B cell (primary cell): ENCODE measurements at regions of chr15 and their contacts with region 1.

Region 1: DNA sequence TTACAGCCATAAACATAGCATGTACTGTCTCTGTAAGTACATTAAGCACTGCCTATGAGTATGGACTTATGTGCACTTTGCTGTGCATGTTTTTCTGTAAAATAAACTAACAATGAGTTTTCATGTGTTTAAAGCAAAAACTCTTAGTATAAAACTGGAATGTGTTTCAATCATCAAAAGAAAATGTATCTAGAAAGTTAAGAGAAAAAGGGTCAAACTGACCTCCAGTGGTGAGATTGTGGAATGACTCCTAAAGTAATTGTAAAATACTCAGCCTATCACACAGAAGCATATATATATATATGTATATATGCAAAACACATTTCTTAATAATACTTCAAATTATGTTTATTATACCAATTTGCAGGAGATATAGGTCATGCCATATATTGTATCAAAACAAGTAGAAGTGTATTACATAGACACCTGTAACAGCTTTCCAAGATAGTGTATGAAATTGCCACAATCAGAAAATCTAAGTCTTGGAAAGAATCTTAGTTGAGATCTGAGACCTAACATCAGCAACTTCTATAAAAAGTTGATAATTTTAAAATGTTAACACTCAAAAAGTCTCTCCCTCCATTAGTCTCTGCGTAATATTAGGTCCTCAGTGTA is 199.6 kb downstream of the FMN1 start:
- DNase-seq: peak; percentile 49
- ATAC-seq: no peak
- H3K4me3 ChIP-seq: no peak overlapping the region
- H3K4me3 Mint-ChIP-seq: no peak overlapping the region
- H3K27ac ChIP-seq: no peak overlapping the region
- H3K27ac Mint-ChIP-seq: no peak overlapping the region
- H3K4me1 ChIP-seq: no peaks in the 10 kb centered on the region
- H3K4me1 Mint-ChIP-seq: no peaks in the 10 kb centered on the region
- H3K27me3 ChIP-seq: no peaks in the 10 kb centered on the region
- H3K27me3 Mint-ChIP-seq: peaks cover 24% of the 10 kb centered on the region
- CTCF ChIP-seq: peak; percentile 74

Region 2: DNA sequence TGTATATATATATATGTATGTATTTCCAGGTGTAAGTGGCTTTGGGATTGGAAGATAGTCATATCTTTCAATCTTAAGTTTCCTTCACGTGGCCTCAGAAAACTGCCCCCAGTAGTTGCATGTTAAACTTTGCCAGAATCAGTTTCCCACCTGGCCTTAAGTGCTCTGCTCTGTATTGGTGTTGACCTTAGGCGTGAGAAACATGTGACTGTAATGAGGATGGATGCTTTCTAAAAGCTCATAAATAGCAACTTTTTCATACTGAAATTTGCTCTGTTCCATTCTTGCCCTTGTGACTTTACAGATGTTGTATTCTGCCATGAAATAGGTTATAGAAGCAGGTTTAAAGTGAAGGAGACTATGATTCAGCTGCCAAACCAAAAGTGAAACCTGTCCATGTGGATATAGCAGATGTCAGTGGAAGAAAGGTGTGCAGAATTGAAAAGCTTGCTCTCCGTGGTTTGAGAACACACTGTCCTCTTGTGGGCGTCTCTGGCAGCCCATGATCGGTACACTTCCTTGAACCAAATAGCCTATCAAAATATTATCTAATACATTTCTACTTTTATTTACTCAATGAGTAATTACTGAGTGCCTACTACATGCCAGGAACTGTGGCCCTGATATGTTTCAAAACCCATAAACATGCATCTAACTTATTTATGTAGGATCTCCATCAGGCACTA is 337.6 kb before region 1 on chr15:
- CTCF ChIA-PET with region 1: interaction called, 177 read pairs
- POLR2A ChIA-PET with region 1: no interaction called
- intact Hi-C with region 1: loop called (anchors 1 kb)
- DNase-seq: no peak
- ATAC-seq: no peak
- H3K4me3 ChIP-seq: no peak overlapping the region
- H3K4me3 Mint-ChIP-seq: no peak overlapping the region
- H3K27ac ChIP-seq: no peak overlapping the region
- H3K27ac Mint-ChIP-seq: no peak overlapping the region
- H3K4me1 ChIP-seq: no peaks in the 10 kb centered on the region
- H3K4me1 Mint-ChIP-seq: peaks cover 3% of the 10 kb centered on the region
- H3K27me3 ChIP-seq: no peaks in the 10 kb centered on the region
- H3K27me3 Mint-ChIP-seq: no peaks in the 10 kb centered on the region
- CTCF ChIP-seq: no peak

Region 3: DNA sequence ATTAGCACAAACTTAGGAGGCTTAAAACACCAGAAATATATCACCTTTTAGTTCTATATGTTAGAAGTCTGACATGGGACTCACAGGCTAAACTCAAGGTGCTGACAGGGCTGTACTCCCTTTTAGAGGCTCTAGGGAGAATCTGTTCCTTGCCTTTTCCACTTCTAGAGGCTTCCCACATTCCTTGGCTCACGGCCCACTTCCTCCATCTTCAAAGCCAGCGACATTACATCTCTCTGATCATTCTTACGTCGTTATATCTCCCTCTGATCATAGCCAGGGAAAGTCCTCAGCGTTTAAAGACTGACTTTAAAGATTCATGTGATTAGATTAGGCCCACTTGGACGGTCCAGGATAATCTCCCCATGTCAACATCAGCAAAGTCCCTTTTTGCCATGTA is 110.8 kb before region 1 on chr15:
- CTCF ChIA-PET with region 1: interaction called, 3 read pairs
- POLR2A ChIA-PET with region 1: no interaction called
- intact Hi-C with region 1: loop called (anchors 5 kb)
- DNase-seq: no peak
- ATAC-seq: no peak
- H3K4me3 ChIP-seq: no peak overlapping the region
- H3K4me3 Mint-ChIP-seq: no peak overlapping the region
- H3K27ac ChIP-seq: no peak overlapping the region
- H3K27ac Mint-ChIP-seq: no peak overlapping the region
- H3K4me1 ChIP-seq: no peaks in the 10 kb centered on the region
- H3K4me1 Mint-ChIP-seq: no peaks in the 10 kb centered on the region
- H3K27me3 ChIP-seq: no peaks in the 10 kb centered on the region
- H3K27me3 Mint-ChIP-seq: no peaks in the 10 kb centered on the region
- CTCF ChIP-seq: no peak

Region 4: DNA sequence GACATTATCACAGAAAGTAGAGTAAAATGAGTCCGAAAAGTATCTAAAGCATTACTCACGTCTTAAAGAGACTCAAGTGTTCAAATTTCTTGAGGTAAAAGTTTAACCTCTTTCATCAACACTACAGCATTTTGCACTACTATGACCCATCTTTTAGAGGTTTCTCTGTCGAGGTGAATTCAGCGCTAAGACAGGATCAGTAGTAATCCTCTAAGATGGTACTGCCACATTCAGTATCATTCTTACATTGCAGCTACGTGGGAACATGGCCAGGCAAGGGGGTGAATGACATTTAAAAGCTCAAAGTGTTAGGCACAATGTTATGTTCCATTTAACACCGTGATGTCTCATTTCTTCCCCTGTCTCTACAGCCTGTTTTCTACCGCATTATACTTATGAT is 11.2 kb before region 1 on chr15:
- CTCF ChIA-PET with region 1: interaction called, 10 read pairs
- POLR2A ChIA-PET with region 1: no interaction called
- intact Hi-C with region 1: no loop called
- DNase-seq: no peak
- ATAC-seq: no peak
- H3K4me3 ChIP-seq: no peak overlapping the region
- H3K4me3 Mint-ChIP-seq: no peak overlapping the region
- H3K27ac ChIP-seq: no peak overlapping the region
- H3K27ac Mint-ChIP-seq: no peak overlapping the region
- H3K4me1 ChIP-seq: no peaks in the 10 kb centered on the region
- H3K4me1 Mint-ChIP-seq: no peaks in the 10 kb centered on the region
- H3K27me3 ChIP-seq: no peaks in the 10 kb centered on the region
- H3K27me3 Mint-ChIP-seq: peaks cover 25% of the 10 kb centered on the region
- CTCF ChIP-seq: no peak

Region 5: GRCh38 chr15:33008284-33008995 is 13.5 kb after region 1 on chr15:
- CTCF ChIA-PET with region 1: no interaction called
- POLR2A ChIA-PET with region 1: no interaction called
- intact Hi-C with region 1: no loop called
- DNase-seq: no peak
- ATAC-seq: no peak
- H3K4me3 ChIP-seq: no peak overlapping the region
- H3K4me3 Mint-ChIP-seq: no peak overlapping the region
- H3K27ac ChIP-seq: no peak overlapping the region
- H3K27ac Mint-ChIP-seq: no peak overlapping the region
- H3K4me1 ChIP-seq: peaks cover 0 to 5% of the 10 kb centered on the region in 2 donors
- H3K4me1 Mint-ChIP-seq: peaks cover 3% of the 10 kb centered on the region
- H3K27me3 ChIP-seq: peaks cover 0 to 16% (median 3%) of the 10 kb centered on the region in 4 experiments
- H3K27me3 Mint-ChIP-seq: peaks cover 31% of the 10 kb centered on the region
- CTCF ChIP-seq: no peak